Natural killer cell (primary cell): ENCODE measurements at regions of chr1 and their contacts with region 1.

Region 1: GRCh38 chr1:167650269-167651160 is 20.5 kb downstream of the RCSD1 start:
- DNase-seq: no peak
- ATAC-seq: peak; percentile 44 to 61 (median 58)
- H3K4me3 ChIP-seq: no peak overlapping the region
- H3K4me3 Mint-ChIP-seq: peak overlapping the region; percentile 89
- H3K27ac ChIP-seq: peak overlapping the region; percentile 68
- H3K27ac Mint-ChIP-seq: peak overlapping the region; percentile 97
- H3K4me1 ChIP-seq: peaks cover 80% of the 10 kb centered on the region
- H3K4me1 Mint-ChIP-seq: peaks cover 73 to 82% of the 10 kb centered on the region in 2 donors
- H3K27me3 ChIP-seq: no peaks in the 10 kb centered on the region
- H3K27me3 Mint-ChIP-seq: no peaks in the 10 kb centered on the region
- CTCF ChIP-seq: no peak

Region 2: GRCh38 chr1:167627865-167628641 is 22.5 kb before region 1 on chr1:
- intact Hi-C with region 1: loop called (anchors 2 kb)
- DNase-seq: peak; percentile 53 to 90
- ATAC-seq: peak; percentile 57 to 77 (median 65)
- H3K4me3 ChIP-seq: peak overlapping the region; percentile 11
- H3K4me3 Mint-ChIP-seq: peak overlapping the region; percentile 88
- H3K27ac ChIP-seq: peak overlapping the region; percentile 89
- H3K27ac Mint-ChIP-seq: peak overlapping the region; percentile 89 to 93
- H3K4me1 ChIP-seq: peaks cover 52% of the 10 kb centered on the region
- H3K4me1 Mint-ChIP-seq: peaks cover 57 to 62% of the 10 kb centered on the region in 2 donors
- H3K27me3 ChIP-seq: no peaks in the 10 kb centered on the region
- H3K27me3 Mint-ChIP-seq: no peaks in the 10 kb centered on the region
- CTCF ChIP-seq: no peak